ENCODE measurements at regions of chr9 and their contacts with region 1.

Region 1: DNA sequence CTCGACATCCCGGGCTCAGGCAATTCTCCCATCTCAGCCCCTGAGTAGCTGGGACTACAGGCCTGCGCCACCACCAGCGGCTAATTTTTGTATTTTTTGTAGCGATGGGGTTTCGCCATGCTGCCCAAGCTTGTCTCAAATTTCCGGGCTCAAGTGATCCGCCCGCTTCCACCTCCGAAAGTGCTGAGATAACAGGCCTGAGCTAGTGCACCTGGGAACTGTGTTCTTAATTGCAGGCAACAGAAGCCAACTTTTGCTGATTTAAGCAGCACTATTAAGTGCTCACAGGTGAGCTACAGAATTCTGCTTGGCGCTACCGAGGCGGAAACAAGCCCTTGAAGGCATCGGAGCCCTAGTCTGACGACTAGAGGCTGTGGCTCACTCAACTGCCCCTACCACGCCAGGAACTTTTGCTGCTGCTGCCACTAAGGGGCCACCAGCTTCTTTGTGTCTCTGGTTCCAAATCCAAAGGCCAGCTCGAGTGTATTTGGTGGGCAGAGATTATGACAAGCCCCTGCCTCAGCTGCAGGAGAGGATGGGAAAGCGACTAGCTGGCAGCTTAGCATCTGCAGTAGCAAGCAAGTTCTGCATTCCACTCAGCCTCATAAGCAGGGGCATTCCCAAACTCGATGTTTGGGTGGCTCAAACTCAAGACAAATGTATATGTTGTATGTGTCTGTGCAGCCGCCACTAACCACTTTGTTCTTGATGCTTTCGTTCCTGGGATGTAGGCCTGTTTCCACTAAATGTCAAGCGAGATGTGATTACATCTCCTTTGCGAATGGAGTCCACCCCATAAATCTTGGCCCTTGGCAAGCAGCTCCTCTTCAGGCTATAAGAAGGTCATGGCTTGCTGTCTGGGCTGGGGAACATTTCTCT is 10.6 kb upstream of the HMCN2 start:
- DNase-seq: no peak
- ATAC-seq: no peak

Region 2: DNA sequence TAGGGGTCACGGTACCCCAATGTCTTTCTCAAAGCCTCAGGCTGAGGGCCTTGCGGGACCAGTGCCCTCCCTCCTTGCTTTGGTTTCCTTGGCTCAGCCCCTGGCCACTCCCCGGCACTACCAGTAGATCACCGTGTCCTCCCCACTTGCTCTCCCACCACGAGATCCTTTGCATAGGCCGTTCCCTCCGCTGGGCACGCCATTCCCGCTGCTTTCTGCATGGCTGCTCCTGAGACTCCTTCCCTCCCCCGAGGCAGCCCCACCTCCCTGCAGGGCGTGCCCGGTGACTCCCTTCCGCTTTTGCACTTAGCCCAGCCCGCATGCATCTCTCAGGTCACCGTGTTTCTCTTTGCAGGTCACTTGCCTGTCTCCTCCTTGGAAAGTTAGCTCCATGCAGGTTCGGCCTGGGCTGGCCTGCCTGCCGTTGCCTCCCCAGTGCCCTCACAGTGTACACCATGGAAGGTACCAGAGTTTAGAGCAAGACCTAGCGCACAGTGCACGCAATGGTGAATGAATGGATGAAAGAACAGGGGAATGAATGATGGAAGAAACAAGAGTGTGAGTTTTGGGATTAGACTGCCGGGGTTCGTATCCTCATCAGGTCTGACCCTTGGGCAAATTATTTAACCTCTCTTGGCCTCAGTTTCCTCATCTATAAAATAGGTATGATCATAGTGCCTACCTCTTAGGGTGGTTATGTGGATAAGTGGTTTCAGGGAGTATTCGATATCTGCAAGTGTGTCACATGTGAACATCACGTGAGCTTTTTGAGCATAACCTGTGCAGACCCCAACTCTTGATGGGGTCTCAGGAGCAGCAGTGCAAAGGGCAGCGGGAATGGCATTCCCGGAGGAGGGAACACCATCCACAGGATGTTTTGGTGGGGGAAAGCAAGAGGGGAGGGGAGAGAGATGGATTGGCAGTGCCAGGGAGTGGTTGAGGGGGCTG is 848.4 kb before region 1 on chr9:
- intact Hi-C with region 1: loop called (anchors 10 kb)
- DNase-seq: no peak
- ATAC-seq: no peak